MCF 10A (cell line): ENCODE measurements at regions of chr6 and their contacts with region 1.

Region 1: DNA sequence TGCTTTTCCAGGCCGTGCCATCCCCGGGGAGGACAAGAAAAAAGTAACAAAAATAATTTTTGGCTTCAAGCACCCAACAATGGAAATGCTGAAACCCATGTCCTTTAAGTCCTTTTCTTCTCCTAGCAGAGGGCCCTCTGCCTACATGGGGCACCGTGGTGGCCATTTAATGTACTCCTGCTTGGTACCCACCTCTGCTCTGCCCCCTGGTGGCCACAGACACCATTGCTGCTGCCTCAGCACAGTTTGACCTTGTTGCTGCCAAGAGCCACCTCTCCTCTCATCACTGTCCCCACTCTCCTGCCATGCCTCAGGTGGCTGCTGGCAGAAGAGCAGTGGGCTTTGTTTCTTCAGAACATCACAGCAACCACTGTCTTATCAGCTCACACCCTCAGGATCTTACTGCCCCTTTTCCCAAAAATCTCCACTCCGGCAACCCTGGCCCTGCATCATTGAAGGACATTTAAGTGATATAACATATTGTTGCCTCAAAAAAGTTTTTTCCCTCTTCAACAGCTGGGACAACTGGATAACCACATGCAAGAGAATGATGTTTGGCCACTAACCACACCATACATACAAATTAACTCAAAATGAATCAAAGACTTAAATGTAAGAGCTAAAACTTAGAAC is 12.9 kb upstream of the ARMC2 start:
- DNase-seq: peak; percentile 78
- H3K4me3 Mint-ChIP-seq: no peak overlapping the region
- H3K27ac Mint-ChIP-seq: no peak overlapping the region
- H3K4me1 Mint-ChIP-seq: peaks cover 34% of the 10 kb centered on the region
- H3K27me3 Mint-ChIP-seq: no peaks in the 10 kb centered on the region
- CTCF ChIP-seq: peak; percentile 94

Region 2: DNA sequence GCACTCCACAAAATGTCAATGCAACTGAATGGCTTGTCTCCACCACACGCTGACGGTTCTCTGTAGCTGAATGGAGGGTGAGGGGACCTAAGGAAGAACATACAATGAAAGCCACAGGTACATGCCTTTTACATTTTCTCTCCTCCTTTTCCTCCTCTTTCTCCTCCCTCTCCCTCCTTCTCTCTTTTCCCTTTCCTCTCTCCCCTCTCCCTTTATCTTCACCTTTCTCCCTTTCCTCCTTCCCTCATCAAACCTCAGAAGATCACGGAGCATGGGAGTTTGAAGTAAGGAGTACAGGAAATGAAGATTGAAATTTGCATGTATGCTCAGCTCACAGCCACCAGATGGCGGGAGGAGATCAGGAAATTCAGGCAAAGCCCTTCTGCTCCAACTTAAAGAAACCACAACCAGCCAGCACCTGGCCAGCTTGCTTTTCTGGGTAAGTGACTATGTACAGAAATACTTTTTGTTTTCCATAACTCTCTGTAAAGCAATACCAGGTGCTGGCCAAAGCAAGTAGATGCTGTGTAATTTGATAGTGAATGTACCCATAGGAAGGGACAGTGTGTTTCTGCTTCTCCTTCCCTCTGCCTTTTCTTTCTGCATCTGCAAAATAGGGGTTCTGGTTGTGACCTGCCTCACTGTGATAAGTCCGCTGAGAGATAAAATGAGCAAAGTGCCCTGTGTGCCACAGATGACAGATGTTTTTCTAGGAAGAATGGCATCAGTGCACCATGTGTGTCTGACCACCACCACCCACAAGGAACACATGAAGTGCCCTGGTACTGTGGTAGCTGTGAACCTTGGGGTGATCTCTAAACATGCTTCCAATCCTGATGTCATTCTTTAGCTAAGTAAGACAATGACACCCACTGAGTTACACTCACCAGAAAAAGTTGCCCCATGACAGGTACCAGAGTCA is 293.2 kb before region 1 on chr6:
- CTCF ChIA-PET with region 1: interaction called, 8 read pairs
- POLR2A ChIA-PET with region 1: interaction called, 3 read pairs
- intact Hi-C with region 1: loop called (anchors 1 kb)
- DNase-seq: peak; percentile 81
- H3K4me3 Mint-ChIP-seq: no peak overlapping the region
- H3K27ac Mint-ChIP-seq: no peak overlapping the region
- H3K4me1 Mint-ChIP-seq: peaks cover 6% of the 10 kb centered on the region
- H3K27me3 Mint-ChIP-seq: no peaks in the 10 kb centered on the region
- CTCF ChIP-seq: peak; percentile 88

Region 3: GRCh38 chr6:108848116-108848868 is 13.0 kb after region 1 on chr6 and contains the start of gene ARMC2:
- CTCF ChIA-PET with region 1: interaction called, 25 read pairs
- POLR2A ChIA-PET with region 1: interaction called, 6 read pairs
- intact Hi-C with region 1: no loop called
- DNase-seq: peak; percentile 89
- H3K4me3 Mint-ChIP-seq: peak within 1 kb of the TSS; percentile 83
- H3K27ac Mint-ChIP-seq: peak within 1 kb of the TSS; percentile 87
- H3K4me1 Mint-ChIP-seq: peaks cover 5% of the 10 kb centered on the region
- H3K27me3 Mint-ChIP-seq: no peaks in the 10 kb centered on the region
- CTCF ChIP-seq: no peak
- total RNA-seq, gene ARMC2: 1.6 and 3.2 TPM in 2 replicates